Activated naive CD4-positive, alpha-beta T cell treated with anti-CD3 and anti-CD28 coated beads for 36 hours (primary cell): ENCODE measurements at regions of chr12 and their contacts with region 1.

Region 1: DNA sequence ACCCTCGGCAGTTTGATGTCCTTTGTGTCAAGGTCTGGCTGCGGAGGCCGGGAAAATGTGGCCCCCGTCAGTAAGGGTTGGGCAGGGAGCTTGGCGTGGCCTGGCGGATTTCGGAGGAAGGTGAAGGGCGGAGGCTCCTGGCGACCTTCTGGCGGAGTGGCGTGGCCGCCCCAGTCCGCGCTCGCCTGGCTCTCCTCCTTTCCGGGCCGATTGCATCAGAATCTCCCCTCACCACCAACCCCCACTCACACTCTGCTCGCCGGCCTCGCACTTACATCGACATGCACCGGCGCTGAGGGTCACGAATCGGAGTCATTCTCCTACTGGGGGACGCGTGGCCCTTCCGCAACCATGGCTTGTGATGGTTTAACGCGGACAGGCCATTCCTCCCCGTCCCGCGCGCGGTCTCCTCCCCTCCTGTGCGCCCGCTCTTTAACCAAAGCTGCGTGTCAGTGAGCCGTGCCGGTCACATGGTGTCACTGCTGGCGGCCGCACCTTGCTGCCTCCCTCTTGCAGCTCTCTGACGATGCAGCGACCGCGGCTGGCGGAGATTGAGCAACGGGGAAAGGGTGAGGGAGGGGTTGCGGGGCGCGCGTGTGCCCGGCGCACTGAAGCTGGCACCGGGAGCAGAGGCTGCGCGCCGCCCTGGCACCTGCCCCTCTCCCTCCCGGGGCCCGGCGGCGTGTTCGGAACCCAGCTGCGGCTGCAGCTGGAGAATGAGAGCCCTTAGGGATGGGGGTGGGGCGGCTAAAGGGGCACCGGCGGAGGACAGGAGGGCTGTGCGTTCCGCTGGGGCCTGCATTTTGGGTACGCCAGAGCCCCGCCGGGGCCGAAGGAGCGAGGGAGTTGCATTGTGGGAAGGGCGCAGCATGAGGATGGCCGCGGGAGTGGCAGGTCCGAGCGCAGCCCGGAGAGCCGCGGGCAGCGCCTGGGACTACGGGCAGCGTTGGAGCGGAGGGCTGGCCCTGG is at the start of gene SLC38A1:
- DNase-seq: peak; percentile 92
- H3K4me3 Mint-ChIP-seq: no peak within 1 kb of the TSS
- H3K27ac Mint-ChIP-seq: no peak within 1 kb of the TSS
- H3K4me1 Mint-ChIP-seq: peaks cover 34% of the 10 kb centered on the region
- H3K27me3 Mint-ChIP-seq: no peaks in the 10 kb centered on the region
- total RNA-seq, gene SLC38A1: 105 to 110 TPM

Region 2: DNA sequence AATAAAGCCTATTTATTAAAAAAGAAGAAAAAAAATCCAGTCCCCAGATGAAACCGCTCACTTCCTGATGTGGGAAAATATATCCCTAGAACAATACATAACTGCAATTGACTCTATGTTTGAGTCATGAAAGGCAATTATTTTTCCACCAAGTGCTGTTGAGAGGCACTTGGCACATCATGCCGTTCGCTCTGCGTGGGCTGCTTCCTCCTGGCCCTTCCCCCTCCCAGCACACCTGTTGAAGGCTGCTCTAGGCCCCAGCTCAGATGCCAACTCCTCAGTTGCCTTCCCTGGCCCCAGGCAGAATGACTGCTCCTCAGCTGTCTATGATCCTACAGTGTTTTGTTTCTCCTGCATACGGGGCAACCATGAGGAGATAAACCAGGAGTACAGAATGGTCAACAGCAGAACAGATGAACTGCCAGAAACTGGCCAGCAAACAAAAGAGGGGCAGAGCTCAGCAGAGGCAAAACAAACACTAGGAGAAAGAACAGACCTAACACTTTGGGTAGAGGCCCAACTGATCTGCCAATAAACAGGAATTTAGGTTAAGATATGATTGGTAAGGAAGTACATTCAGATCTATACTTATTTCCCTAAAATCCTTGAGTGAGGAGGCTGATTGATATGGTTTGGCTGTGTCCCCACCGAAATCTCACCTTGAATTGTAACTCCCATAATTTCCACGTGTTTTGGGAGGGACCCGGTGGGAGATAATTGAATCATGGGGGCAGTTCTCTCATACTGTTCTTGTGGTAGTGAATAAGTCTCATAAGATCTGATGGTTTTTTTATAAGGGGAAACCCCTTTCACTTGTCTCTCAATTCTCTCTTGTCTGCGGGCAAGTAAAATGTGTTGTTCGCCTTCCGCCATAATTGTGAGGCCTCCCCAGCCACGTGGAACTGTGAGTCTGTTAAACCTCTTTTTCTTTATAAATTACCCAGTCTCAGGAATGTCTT is 58.7 kb before region 1 on chr12:
- CTCF ChIA-PET with region 1: interaction called, 7 read pairs
- intact Hi-C with region 1: loop called (anchors 1 kb)
- DNase-seq: peak; percentile 87
- H3K4me3 Mint-ChIP-seq: peak overlapping the region; percentile 60
- H3K27ac Mint-ChIP-seq: peak overlapping the region; percentile 99
- H3K4me1 Mint-ChIP-seq: peaks cover 84% of the 10 kb centered on the region
- H3K27me3 Mint-ChIP-seq: no peaks in the 10 kb centered on the region

Region 3: DNA sequence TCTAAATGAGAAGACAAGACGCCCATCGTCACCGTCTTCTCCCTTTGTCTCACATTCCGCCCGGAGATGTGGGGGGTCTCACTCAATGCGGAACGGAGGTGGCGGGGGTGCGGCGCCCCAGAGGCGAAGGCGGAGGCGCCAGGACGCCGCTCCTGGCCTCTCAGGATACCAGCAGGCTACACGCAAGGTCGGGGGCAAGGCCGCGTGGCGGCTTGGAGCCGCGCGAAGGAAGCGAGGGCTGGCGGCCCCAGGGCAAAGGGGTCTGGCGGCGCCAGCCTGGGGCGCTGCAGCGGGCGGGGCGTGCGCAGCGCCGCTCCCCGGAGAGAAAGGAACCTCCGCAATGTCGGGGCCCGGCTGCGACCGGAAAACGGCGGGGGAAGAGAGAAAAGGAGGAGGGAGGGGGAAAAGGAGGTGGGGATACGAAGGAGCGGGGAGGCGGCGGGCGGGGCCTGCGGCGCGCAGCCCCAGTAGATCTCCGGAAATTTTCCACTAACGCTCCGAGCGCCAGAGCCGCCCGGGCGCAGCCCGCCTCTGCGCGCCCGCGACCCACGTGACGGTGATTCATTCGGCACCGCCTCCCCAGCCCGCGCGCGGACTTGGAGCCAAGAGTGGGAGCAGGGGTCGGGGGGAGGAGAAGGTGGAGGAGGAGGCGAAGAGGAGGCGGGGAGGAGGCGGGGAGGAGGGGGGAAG is 114.2 kb after region 1 on chr12:
- CTCF ChIA-PET with region 1: no interaction called
- intact Hi-C with region 1: loop called (anchors 1 kb)
- DNase-seq: peak; percentile 96
- H3K4me3 Mint-ChIP-seq: peak overlapping the region; percentile 77
- H3K27ac Mint-ChIP-seq: peak overlapping the region; percentile 87
- H3K4me1 Mint-ChIP-seq: peaks cover 38% of the 10 kb centered on the region
- H3K27me3 Mint-ChIP-seq: no peaks in the 10 kb centered on the region

Region 4: DNA sequence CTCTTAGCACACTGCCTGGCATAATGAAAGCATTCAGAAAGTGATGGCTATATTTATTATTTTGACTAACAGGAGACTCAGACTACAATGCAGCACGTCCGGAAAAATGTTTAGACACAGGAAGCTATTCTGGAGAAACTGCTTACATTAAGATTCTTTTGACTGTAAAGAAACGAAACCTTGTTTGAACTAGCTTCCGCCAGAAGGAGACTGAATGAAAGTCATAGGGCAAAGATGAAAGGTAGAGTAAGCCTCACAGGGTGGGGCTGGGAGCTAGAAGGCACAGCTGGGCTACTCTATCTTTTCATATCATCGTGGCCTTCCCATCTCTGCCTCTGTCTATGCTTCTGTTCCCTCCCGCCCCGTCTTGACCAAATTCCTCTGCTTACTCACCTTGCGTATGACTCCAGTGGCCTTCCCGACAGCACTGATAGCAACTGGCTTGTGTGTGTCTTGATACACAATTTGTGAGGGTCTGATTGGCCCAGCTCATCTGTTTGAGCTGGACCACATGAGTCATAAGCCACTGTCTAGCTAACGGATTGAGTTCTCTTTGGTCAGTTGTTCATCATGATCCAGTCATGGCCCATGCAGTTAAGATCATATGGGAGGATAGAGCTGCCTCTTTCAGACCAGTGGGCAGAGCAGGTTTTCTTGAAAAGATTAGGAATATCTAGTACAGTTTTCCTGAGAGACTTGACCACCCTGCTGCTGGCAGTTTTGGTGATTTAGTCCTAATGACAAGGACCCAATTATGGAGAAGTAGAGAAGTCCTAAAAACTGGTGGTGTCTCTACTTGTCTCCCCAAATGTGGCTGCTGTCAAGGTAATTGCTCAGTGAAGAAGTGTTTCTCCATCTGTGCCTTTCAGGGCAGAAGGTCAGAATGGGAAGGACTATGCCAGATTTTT is 255.2 kb after region 1 on chr12:
- CTCF ChIA-PET with region 1: no interaction called
- intact Hi-C with region 1: loop called (anchors 1 kb)
- DNase-seq: peak; percentile 76
- H3K4me3 Mint-ChIP-seq: peak overlapping the region; percentile 61
- H3K27ac Mint-ChIP-seq: peak overlapping the region; percentile 81
- H3K4me1 Mint-ChIP-seq: peaks cover 38% of the 10 kb centered on the region
- H3K27me3 Mint-ChIP-seq: no peaks in the 10 kb centered on the region

Region 5: DNA sequence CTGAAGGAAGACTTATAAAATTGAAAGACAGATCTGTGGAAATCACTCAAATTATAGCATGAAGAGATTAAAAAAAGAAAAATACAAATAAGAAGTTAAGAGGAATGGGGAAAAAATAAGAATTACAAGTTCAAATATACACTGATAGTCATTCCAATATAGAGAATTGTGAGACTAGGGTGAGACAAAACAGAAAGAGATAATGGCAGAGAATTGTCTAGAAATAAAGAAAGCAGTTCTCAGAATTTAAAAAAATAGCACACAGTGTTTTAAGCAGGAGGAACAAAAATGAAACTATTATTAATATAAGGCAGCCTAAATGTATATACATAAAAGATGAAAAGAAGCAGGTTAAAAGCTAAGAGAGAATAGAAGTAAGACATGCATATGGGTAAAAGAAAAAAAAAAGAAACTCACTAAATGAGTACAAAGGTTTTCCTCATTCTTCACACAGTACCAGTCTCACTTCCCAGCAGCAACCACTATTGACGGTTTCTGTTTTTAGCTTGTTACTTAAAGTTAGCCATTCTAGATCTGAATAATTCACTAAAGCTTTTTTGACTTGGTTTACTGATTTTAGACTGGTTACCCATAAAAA is 525.8 kb after region 1 on chr12:
- CTCF ChIA-PET with region 1: no interaction called
- intact Hi-C with region 1: loop called (anchors 2 kb)
- DNase-seq: peak; percentile 46
- H3K4me3 Mint-ChIP-seq: no peak overlapping the region
- H3K27ac Mint-ChIP-seq: peak overlapping the region; percentile 80
- H3K4me1 Mint-ChIP-seq: peaks cover 27% of the 10 kb centered on the region
- H3K27me3 Mint-ChIP-seq: no peaks in the 10 kb centered on the region

Region 6: GRCh38 chr12:47812797-47813510 is 1544.1 kb after region 1 on chr12:
- CTCF ChIA-PET with region 1: no interaction called
- intact Hi-C with region 1: loop called (anchors 5 kb)
- DNase-seq: peak; percentile 99
- H3K4me3 Mint-ChIP-seq: peak overlapping the region; percentile 88
- H3K27ac Mint-ChIP-seq: peak overlapping the region; percentile 98
- H3K4me1 Mint-ChIP-seq: peaks cover 75% of the 10 kb centered on the region
- H3K27me3 Mint-ChIP-seq: no peaks in the 10 kb centered on the region